Sigmoid colon (tissue), 7 donors: ENCODE measurements at regions of chr1 and their contacts with region 1.

Region 1: GRCh38 chr1:205325334-205325884 is 3.9 kb upstream of the NUAK2 start:
- DNase-seq: peak; percentile 78
- H3K4me3 ChIP-seq: no peak overlapping the region
- H3K27ac ChIP-seq: no peak overlapping the region
- H3K4me1 ChIP-seq: peaks cover 4 to 18% (median 14%) of the 10 kb centered on the region in 4 donors
- H3K27me3 ChIP-seq: no peaks in the 10 kb centered on the region
- CTCF ChIP-seq: peak; percentile 32 to 76 (median 60)
- EP300 ChIP-seq: no peak
- POLR2A ChIP-seq: no peak

Region 2: GRCh38 chr1:204128964-204129896 is 1196.2 kb before region 1 on chr1:
- intact Hi-C with region 1: no loop called
- DNase-seq: peak; percentile 91
- H3K4me3 ChIP-seq: peak overlapping the region in 3 of 4 donors; percentile 15 to 33 (median 24)
- H3K27ac ChIP-seq: peak overlapping the region; percentile 27 to 56 (median 42)
- H3K4me1 ChIP-seq: peaks cover 0 to 50% (median 40%) of the 10 kb centered on the region in 4 donors
- H3K27me3 ChIP-seq: no peaks in the 10 kb centered on the region
- CTCF ChIP-seq: peak; percentile 86 to 97 (median 92)
- EP300 ChIP-seq: no peak
- POLR2A ChIP-seq: no peak

Region 3: GRCh38 chr1:205273551-205273982 is 51.8 kb before region 1 on chr1:
- intact Hi-C with region 1: loop called (anchors 1 kb)
- DNase-seq: peak; percentile 90
- H3K4me3 ChIP-seq: no peak overlapping the region
- H3K27ac ChIP-seq: no peak overlapping the region
- H3K4me1 ChIP-seq: peaks cover 0 to 16% (median 13%) of the 10 kb centered on the region in 4 donors
- H3K27me3 ChIP-seq: no peaks in the 10 kb centered on the region
- CTCF ChIP-seq: peak; percentile 90 to 97 (median 96)
- EP300 ChIP-seq: no peak
- POLR2A ChIP-seq: no peak